Mammary epithelial cell (primary cell): ENCODE measurements at regions of chr2 and their contacts with region 1.

Region 1: DNA sequence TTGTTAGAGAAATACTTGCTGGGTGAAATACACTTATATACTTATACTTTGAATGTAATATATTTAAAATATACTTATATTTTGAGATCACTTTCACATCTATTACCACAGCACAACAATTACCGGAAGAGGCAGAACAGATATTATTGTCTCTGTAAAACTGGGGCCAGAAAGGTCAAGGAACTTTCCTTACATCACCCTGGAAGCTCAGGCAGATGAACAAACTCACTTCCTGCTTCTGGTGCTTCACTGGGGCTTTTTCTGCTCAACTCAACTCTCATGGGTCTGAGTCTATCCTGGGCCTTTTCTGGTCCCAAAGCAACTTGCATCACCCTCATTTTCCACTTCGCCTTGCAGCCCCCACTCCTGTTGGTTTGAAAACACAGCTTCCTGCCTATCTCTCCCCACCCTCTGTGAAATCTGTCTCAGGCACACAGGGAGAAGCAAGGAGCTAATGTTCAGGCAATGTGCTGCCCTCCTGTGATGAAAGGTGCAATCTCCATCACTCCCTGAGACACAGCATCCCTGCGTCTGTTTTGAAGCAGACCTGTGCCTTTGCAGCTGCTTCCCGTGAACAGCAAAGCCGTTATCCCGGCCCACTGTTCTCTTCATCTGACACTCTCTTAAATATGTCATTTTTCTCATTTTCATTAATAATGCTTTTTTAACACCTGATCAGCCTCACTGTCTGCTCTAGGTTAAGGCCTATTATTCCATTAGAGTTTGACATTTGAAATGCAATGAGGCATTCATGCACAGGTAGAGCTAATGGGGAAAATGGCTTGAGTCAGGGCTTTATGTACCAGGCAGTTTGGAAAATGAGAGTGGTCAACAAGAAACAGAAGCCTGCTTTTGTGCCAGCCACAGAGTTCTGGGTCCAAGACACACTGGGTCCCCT is 251.9 kb upstream of the CHAC2 start:
- DNase-seq: peak; percentile 14
- H3K4me3 ChIP-seq: no peak overlapping the region
- H3K27ac ChIP-seq: no peak overlapping the region
- H3K4me1 ChIP-seq: peaks cover 19% of the 10 kb centered on the region
- H3K27me3 ChIP-seq: no peaks in the 10 kb centered on the region
- CTCF ChIP-seq: peak in 1 of 2 donors; percentile 46

Region 2: GRCh38 chr2:53275743-53276142 is 239.9 kb before region 1 on chr2:
- CTCF ChIA-PET with region 1: no interaction called
- dilution Hi-C with region 1: no loop called
- in situ Hi-C with region 1: no loop called
- intact Hi-C with region 1: loop called (anchors 5 kb)
- DNase-seq: peak; percentile 17
- H3K4me3 ChIP-seq: no peak overlapping the region
- H3K27ac ChIP-seq: no peak overlapping the region
- H3K4me1 ChIP-seq: no peaks in the 10 kb centered on the region
- H3K27me3 ChIP-seq: no peaks in the 10 kb centered on the region
- CTCF ChIP-seq: peak in 1 of 2 donors; percentile 19

Region 3: GRCh38 chr2:53535234-53535840 is 19.7 kb after region 1 on chr2:
- CTCF ChIA-PET with region 1: no interaction called
- dilution Hi-C with region 1: no loop called
- in situ Hi-C with region 1: no loop called
- intact Hi-C with region 1: no loop called
- DNase-seq: no peak
- H3K4me3 ChIP-seq: no peak overlapping the region
- H3K27ac ChIP-seq: no peak overlapping the region
- H3K4me1 ChIP-seq: no peaks in the 10 kb centered on the region
- H3K27me3 ChIP-seq: no peaks in the 10 kb centered on the region
- CTCF ChIP-seq: no peak

Region 4: DNA sequence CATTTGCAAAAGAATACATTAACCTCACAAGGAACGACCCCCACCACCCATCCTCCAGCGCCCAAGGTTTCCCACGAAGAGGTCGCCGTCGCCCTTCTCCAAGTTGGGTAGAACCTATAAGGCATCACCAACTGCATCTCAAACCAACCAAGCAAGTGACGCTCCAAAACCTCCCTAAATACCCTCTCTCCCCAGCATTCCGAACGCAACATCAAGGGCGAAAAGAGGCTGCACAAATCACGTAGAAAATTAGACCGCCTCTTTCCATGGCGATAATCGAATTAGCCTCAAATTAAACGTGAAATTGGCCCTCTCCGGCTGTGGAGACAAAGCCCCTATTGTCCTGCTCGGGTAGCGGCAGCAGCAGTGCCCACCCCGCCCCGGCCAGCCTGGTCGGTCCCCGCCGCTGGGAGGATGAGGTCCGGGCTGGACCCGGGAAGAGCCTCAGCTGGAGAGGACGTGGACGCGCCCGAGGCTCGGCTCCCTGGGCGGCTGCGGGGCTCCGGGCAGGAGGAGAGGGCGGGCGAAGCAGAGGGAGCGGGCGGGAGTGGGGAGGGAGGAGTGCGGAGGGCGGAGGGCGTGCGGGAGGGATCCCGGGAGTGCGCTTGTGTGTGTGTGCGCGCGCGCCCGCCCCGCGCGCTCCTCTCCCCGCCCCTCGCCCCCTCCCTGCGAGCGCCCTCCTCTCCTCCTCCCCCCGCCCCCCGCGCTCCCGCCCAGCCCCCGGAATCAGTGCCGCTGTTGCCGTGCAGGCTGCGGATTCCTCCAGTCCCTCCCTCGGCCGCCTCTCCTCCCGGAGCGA is 940.1 kb after region 1 on chr2 and contains the start of gene SPTBN1:
- CTCF ChIA-PET with region 1: interaction called, 20 read pairs
- dilution Hi-C with region 1: no loop called
- in situ Hi-C with region 1: no loop called
- intact Hi-C with region 1: no loop called
- DNase-seq: peak; percentile 74
- H3K4me3 ChIP-seq: peak within 1 kb of the TSS; percentile 60 to 81 (median 81)
- H3K27ac ChIP-seq: peak within 1 kb of the TSS; percentile 32
- H3K4me1 ChIP-seq: peaks cover 26% of the 10 kb centered on the region
- H3K27me3 ChIP-seq: no peaks in the 10 kb centered on the region
- CTCF ChIP-seq: no peak
- total RNA-seq, gene SPTBN1: 206 to 210 TPM